Activated T-helper 2 cell treated with anti-CD3 and anti-CD28 coated beads, Interferon-gamma antibody, Interleukin-2, Interleukin-4, amounts not matched to agents 10 μg/mL and 5 μg/mL and 100 μg/mL, durations not matched to agents 14 hours and 24 hours and 36 hours (primary cell): ENCODE measurements at regions of chr1 and their contacts with region 1.

Region 1: DNA sequence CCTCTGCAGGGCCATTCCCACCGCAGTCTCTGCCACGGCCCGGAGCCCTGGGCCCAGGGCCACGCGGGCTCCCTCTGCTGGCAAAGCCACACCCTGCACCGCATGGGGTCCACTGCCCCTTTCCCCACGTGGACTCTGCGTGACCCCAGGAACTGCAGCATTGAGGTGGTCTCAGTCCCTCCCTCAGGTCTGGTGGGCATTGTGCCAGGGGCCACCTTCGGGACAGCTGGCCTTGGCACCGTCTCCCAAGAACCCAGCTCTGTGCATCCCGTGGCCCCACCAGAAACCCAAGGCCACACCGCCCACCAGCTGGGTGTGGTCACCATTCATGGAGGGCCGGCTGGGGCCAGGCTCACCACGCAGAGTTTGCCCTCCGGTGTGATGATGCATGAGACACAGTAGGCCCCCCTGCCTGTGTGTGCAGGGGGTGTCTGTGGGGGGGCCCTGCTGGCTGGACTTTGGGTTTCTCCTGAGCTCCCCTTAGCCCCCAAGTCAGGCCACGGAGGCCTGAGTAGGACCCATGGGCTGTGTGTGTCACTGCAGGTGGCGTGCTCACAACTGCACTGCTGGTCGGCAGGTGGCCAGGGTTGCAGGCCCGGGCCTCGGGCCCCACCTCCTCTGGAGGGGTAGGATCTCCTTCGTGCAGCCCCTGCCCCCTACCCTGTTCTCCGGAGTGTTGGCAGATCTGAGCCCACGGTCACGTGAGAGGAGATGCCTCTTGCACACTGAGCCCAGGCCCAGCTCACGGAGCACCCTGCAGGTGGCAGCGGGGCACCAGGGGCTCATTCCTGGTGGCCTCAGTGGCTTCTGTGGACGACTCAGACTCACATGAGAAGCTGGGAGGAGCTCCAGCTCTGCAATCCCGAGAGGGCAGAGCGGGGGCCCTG is 5.8 kb downstream of the VWA1 start:
- DNase-seq: no peak
- H3K4me3 Mint-ChIP-seq: no peak overlapping the region
- H3K27ac Mint-ChIP-seq: no peak overlapping the region
- H3K4me1 Mint-ChIP-seq: no peaks in the 10 kb centered on the region
- H3K27me3 Mint-ChIP-seq: peaks cover 2% of the 10 kb centered on the region

Region 2: GRCh38 chr1:1406817-1407635 is 34.2 kb before region 1 on chr1 and contains the start of gene MRPL20:
- intact Hi-C with region 1: loop called (anchors 5 kb)
- DNase-seq: peak; percentile 96
- H3K4me3 Mint-ChIP-seq: peak within 1 kb of the TSS; percentile 88
- H3K27ac Mint-ChIP-seq: peak within 1 kb of the TSS; percentile 89
- H3K4me1 Mint-ChIP-seq: peaks cover 23% of the 10 kb centered on the region
- H3K27me3 Mint-ChIP-seq: no peaks in the 10 kb centered on the region
- total RNA-seq, gene MRPL20: 143 and 154 TPM in 2 replicates